OCI-LY7 (cell line): ENCODE measurements at regions of chr2 and their contacts with region 1.

Region 1: GRCh38 chr2:133886735-133887660 is 318.7 kb upstream of the NCKAP5 start:
- DNase-seq: peak; percentile 76
- H3K4me3 ChIP-seq: no peak overlapping the region
- H3K27ac ChIP-seq: no peak overlapping the region
- H3K4me1 ChIP-seq: no peaks in the 10 kb centered on the region
- CTCF ChIP-seq: peak; percentile 86

Region 2: GRCh38 chr2:134207564-134208209 is 320.7 kb after region 1 on chr2:
- CTCF ChIA-PET with region 1: no interaction called
- POLR2A ChIA-PET with region 1: no interaction called
- intact Hi-C with region 1: loop called (anchors 5 kb)
- DNase-seq: peak; percentile 65
- H3K4me3 ChIP-seq: no peak overlapping the region
- H3K27ac ChIP-seq: no peak overlapping the region
- H3K4me1 ChIP-seq: peaks cover 44% of the 10 kb centered on the region
- CTCF ChIP-seq: peak; percentile 85

Region 3: DNA sequence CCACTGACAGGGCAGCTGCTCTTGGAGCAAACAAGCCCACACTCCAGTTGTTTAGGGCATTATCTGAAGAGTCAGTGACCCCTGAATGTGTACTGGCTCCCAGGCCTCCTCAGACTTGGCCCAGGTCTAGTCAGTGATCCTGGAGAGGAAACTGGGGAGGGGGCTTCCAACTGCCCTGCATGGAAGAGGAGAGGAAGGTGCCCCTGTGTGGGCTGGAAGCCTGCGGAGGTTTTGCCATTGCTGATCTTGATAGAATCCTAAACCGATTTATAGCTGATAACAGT is 564.3 kb after region 1 on chr2:
- CTCF ChIA-PET with region 1: no interaction called
- POLR2A ChIA-PET with region 1: no interaction called
- intact Hi-C with region 1: loop called (anchors 1 kb)
- DNase-seq: no peak
- H3K4me3 ChIP-seq: no peak overlapping the region
- H3K27ac ChIP-seq: no peak overlapping the region
- H3K4me1 ChIP-seq: no peaks in the 10 kb centered on the region
- CTCF ChIP-seq: no peak

Region 4: GRCh38 chr2:134897932-134898331 is 1010.9 kb after region 1 on chr2:
- CTCF ChIA-PET with region 1: no interaction called
- POLR2A ChIA-PET with region 1: no interaction called
- intact Hi-C with region 1: loop called (anchors 10 kb)
- DNase-seq: peak; percentile 26
- H3K4me3 ChIP-seq: no peak overlapping the region
- H3K27ac ChIP-seq: no peak overlapping the region
- H3K4me1 ChIP-seq: no peaks in the 10 kb centered on the region
- CTCF ChIP-seq: peak; percentile 80